ENCODE measurements at regions of chr12 and their contacts with region 1.

Region 1: DNA sequence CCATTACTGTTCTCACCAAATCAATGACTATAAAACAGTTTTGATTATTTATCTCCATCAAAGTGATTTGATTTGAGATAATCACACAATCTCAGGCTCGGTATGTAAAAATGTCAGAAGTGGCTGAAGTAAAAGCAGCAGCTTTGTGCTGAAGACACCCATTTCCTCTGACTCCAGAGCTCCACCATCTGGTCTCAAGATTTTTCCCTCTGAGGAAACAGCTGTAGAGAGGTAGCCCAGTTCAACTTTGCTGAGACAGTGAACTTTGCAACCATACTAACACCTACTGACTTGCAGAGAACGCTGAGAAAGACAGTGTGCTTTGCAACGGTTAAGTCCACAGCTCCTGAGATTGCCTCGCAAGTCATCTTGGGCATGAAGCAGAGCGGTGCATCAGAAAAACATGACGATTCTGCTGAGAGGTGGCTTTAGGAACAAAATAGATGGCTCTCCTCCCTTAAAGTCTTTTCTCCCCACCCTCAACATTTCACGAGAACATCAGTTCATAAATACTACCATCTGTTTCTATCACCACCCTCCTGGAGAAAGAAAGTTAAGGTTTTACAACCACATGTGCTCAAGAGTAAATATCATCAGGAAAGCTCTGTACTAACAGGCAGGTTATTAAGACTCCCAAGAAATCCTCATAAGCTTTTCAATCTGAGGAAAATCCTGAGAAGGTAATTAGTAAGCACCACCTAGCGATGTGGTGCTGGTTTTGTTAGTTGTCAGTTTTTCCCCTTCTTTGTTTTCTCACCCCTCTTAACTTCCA is 34.8 kb downstream of the HIGD1C start:
- DNase-seq: peak; percentile 48
- ATAC-seq: peak; percentile 85
- H3K4me3 ChIP-seq: no peak overlapping the region
- H3K27ac ChIP-seq: no peak overlapping the region
- H3K4me1 ChIP-seq: no peaks in the 10 kb centered on the region
- H3K27me3 ChIP-seq: no peaks in the 10 kb centered on the region
- CTCF ChIP-seq: peak; percentile 79

Region 2: DNA sequence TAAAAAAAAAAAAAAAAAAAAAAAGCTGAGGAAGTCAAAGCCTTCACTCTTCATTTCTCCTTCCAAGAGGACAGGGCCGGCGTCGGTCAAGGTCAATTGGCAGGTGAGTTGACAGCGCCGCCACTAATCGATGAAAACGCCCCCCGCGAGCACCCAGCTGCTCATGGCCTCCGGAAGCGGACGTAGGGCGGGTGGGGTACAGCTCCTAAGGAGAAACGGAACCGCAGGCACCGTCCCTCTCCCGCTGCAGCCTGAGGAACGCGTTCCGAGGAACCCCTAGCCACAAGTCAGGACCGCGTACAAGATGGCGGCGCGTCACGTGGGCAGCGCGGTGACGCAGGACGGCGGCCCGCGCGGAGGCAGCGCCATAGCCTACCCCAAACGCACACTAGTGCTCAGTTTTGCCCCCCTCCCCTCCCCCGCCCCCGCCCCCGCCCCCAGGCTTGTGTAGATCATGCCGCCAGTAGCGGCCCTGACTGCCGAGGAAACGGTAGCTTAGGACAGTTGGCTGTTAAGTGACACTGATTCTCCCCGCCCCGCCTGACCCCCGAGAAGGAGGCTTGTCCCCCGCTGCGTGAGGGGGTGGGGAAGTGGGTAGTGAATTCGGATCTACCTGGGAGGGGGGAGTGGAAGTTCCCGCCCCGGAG is 223.4 kb before region 1 on chr12 and contains the start of gene ATF1:
- CTCF ChIA-PET with region 1: interaction called, 10 read pairs
- POLR2A ChIA-PET with region 1: no interaction called
- in situ Hi-C with region 1: no loop called
- intact Hi-C with region 1: loop called (anchors 5 kb)
- DNase-seq: peak; percentile 61
- ATAC-seq: peak; percentile 95
- H3K4me3 ChIP-seq: peak within 1 kb of the TSS; percentile 87 to 89
- H3K27ac ChIP-seq: peak within 1 kb of the TSS; percentile 86
- H3K4me1 ChIP-seq: peaks cover 25% of the 10 kb centered on the region
- H3K27me3 ChIP-seq: no peaks in the 10 kb centered on the region
- CTCF ChIP-seq: no peak
- total RNA-seq, gene ATF1: 52.2 TPM

Region 3: GRCh38 chr12:50825372-50825838 is 161.7 kb before region 1 on chr12:
- CTCF ChIA-PET with region 1: interaction called, 10 read pairs
- POLR2A ChIA-PET with region 1: no interaction called
- in situ Hi-C with region 1: no loop called
- intact Hi-C with region 1: loop called (anchors 2 kb)
- DNase-seq: peak; percentile 41
- ATAC-seq: peak; percentile 78
- H3K4me3 ChIP-seq: no peak overlapping the region
- H3K27ac ChIP-seq: peak overlapping the region; percentile 63; the same call in 1 of the 2 replicates
- H3K4me1 ChIP-seq: no peaks in the 10 kb centered on the region; the same call in 1 of the 2 replicates
- H3K27me3 ChIP-seq: no peaks in the 10 kb centered on the region
- CTCF ChIP-seq: peak; percentile 69

Region 4: GRCh38 chr12:50901685-50902113 is 85.5 kb before region 1 on chr12:
- CTCF ChIA-PET with region 1: interaction called, 13 read pairs
- POLR2A ChIA-PET with region 1: no interaction called
- in situ Hi-C with region 1: no loop called
- intact Hi-C with region 1: no loop called
- DNase-seq: no peak
- ATAC-seq: no peak
- H3K4me3 ChIP-seq: no peak overlapping the region
- H3K27ac ChIP-seq: no peak overlapping the region
- H3K4me1 ChIP-seq: no peaks in the 10 kb centered on the region
- H3K27me3 ChIP-seq: no peaks in the 10 kb centered on the region
- CTCF ChIP-seq: no peak

Region 5: GRCh38 chr12:50934981-50935807 is 52.0 kb before region 1 on chr12:
- CTCF ChIA-PET with region 1: no interaction called
- POLR2A ChIA-PET with region 1: no interaction called
- in situ Hi-C with region 1: no loop called
- intact Hi-C with region 1: no loop called
- DNase-seq: no peak
- ATAC-seq: no peak
- H3K4me3 ChIP-seq: no peak overlapping the region
- H3K27ac ChIP-seq: no peak overlapping the region
- H3K4me1 ChIP-seq: no peaks in the 10 kb centered on the region
- H3K27me3 ChIP-seq: 0 out of 2 replicates have a peak, but pooled peaks cover 2% of the 10 kb centered on the region
- CTCF ChIP-seq: no peak

Measured in Panc1 (cell line).